ENCODE measurements at regions of chr12 and their contacts with region 1.

Region 1: GRCh38 chr12:113678223-113679119 is 206.8 kb upstream of the LHX5 start:
- DNase-seq: peak; percentile 18
- H3K4me3 ChIP-seq: no peak overlapping the region
- H3K27ac ChIP-seq: no peak overlapping the region
- H3K4me1 ChIP-seq: no peaks in the 10 kb centered on the region
- H3K27me3 ChIP-seq: peaks cover 2% of the 10 kb centered on the region
- CTCF ChIP-seq: no peak

Region 2: DNA sequence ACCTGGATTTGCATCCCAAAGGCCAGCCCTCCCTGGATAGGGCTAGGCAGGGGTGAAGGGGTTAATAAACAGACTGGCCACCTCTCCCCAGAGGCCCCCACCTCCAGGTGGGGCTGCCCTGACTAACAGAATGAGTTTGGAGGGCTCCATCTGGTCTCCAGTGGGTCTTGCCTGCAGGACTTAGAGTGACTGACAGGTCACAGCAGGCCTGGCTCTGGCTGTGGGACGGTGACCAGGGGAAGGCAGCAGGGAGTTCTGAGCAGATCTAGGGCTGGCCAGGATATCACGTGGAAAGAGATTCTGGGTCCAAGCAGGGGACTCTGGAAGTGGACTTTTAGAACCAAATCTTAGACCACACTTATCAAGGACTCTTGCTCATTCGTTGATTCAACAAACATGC is 165.9 kb before region 1 on chr12:
- CTCF ChIA-PET with region 1: no interaction called
- dilution Hi-C with region 1: no loop called
- in situ Hi-C with region 1: no loop called
- intact Hi-C with region 1: no loop called
- DNase-seq: no peak
- H3K4me3 ChIP-seq: no peak overlapping the region
- H3K27ac ChIP-seq: no peak overlapping the region
- H3K4me1 ChIP-seq: no peaks in the 10 kb centered on the region
- H3K27me3 ChIP-seq: peaks cover 7% of the 10 kb centered on the region
- CTCF ChIP-seq: no peak

Region 3: DNA sequence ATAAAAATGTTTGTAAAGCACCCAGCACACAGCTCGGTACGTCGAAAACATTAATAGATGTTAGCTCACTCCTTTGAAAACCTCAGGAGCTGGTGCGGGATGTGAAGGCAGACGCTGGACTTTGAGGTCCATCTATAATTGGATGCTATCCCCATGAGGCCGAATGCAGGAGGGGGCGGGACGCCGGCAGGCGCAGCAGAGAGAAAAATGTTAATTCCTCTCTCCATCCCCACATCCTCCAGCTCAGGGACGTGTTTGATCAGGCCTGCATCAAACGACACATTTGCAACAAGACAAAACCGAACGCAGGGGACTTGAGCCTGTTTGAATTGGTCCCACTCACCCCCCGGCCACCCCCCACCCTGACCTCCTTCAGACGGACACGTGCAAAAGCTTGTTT is 56.7 kb after region 1 on chr12:
- CTCF ChIA-PET with region 1: no interaction called
- dilution Hi-C with region 1: loop called (anchors 10 kb)
- in situ Hi-C with region 1: no loop called
- intact Hi-C with region 1: no loop called
- DNase-seq: no peak
- H3K4me3 ChIP-seq: no peak overlapping the region
- H3K27ac ChIP-seq: no peak overlapping the region
- H3K4me1 ChIP-seq: no peaks in the 10 kb centered on the region
- H3K27me3 ChIP-seq: no peaks in the 10 kb centered on the region
- CTCF ChIP-seq: no peak

Measured in mammary epithelial cell (primary cell).